A549 (cell line): ENCODE measurements at regions of chr14 and their contacts with region 1.

Region 1: GRCh38 chr14:34714320-34715126 is at the start of gene CFL2:
- DNase-seq: peak; percentile 73 to 88
- ATAC-seq: peak; percentile 97 to 98
- H3K4me3 ChIP-seq: peak within 1 kb of the TSS; percentile 74
- H3K27ac ChIP-seq: peak within 1 kb of the TSS; percentile 83 to 99
- H3K4me1 ChIP-seq: peaks cover 52% of the 10 kb centered on the region
- CTCF ChIP-seq: no peak
- EP300 ChIP-seq: no peak
- POLR2A ChIP-seq: peak; percentile 66
- RAD21 ChIP-seq: no peak; a peak in 1 of 5 replicates
- polyA plus RNA-seq, gene CFL2: 144 and 167 TPM in 2 replicates

Region 2: GRCh38 chr14:34668111-34668510 is 46.4 kb before region 1 on chr14:
- CTCF ChIA-PET with region 1: interaction called, 13 read pairs
- POLR2A ChIA-PET with region 1: interaction called, 3 read pairs
- DNase-seq: no peak
- ATAC-seq: no peak
- H3K4me3 ChIP-seq: no peak overlapping the region
- H3K27ac ChIP-seq: peak overlapping the region in 1 of 2 experiments; percentile 17; a peak in 3 of 6 replicates
- H3K4me1 ChIP-seq: peaks cover 16% of the 10 kb centered on the region
- CTCF ChIP-seq: no peak
- EP300 ChIP-seq: no peak
- POLR2A ChIP-seq: no peak
- RAD21 ChIP-seq: no peak

Region 3: DNA sequence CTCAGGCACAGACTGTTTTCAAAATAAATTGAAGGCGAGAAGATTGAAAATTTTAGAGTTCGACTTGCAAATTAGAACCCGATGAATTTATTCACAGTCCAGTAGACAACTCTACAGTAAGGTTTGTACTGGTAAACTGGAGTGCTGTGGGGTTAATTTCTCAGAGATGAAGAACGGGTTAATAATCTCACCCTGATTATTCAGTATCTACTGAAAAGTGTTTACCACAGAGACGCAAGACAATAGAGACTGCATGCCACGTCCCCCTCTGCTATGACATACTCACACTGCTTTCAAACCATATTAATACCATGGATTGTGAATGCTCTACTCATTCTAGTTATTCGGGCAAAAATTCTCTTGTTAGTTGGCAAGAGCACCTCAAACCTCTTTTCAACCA is 36.2 kb before region 1 on chr14:
- CTCF ChIA-PET with region 1: interaction called, 13 read pairs
- POLR2A ChIA-PET with region 1: interaction called, 3 read pairs
- DNase-seq: no peak
- ATAC-seq: peak in 1 of 2 experiments; percentile 44; a peak in 4 of 6 replicates
- H3K4me3 ChIP-seq: no peak overlapping the region
- H3K27ac ChIP-seq: peak overlapping the region; percentile 15 to 63; a peak in 5 of 6 replicates
- H3K4me1 ChIP-seq: peaks cover 24% of the 10 kb centered on the region
- CTCF ChIP-seq: no peak
- EP300 ChIP-seq: no peak
- POLR2A ChIP-seq: no peak
- RAD21 ChIP-seq: no peak

Region 4: GRCh38 chr14:34693228-34693939 is 21.1 kb before region 1 on chr14:
- CTCF ChIA-PET with region 1: interaction called, 3 read pairs
- POLR2A ChIA-PET with region 1: interaction called, 12 read pairs
- DNase-seq: peak; percentile 68 to 83
- ATAC-seq: peak; percentile 97 to 98
- H3K4me3 ChIP-seq: peak overlapping the region; percentile 53
- H3K27ac ChIP-seq: peak overlapping the region; percentile 82 to 88
- H3K4me1 ChIP-seq: peaks cover 11% of the 10 kb centered on the region; the same call in 2 of the 3 replicates
- CTCF ChIP-seq: no peak
- EP300 ChIP-seq: no peak
- POLR2A ChIP-seq: peak; percentile 87
- RAD21 ChIP-seq: no peak

Region 5: DNA sequence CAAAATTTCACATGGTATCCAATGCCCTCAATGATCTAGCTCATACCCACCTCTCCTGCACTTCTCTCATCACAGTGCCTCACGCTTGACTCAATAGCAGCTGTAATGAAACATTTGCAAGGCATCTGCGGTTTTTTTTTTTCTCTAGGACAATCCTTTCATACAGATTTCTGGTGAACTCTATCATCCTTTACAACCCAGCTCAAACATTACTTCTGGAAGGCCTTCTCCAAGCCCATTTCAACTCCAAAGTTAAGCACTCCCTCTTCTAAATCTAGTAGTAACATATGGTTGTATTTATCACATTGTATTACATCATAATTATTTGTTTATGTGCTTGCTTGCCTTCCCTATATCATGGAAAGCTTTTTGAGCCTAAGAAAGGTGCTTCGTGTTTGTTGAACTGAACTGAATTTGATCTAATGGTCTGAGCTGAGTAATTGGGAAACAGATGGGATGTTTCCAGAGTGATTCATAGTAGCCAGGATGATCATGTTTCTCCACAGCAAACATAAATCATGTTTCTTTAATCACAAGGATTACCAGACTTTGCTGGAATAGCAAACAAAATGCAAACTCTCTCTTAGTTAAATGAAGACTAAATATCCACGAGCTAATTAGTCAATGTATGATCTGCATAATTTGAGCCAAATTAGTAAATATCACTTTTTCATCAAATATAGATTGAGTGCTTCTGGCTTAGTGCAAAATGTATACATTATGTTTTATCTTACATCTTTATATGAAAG is 14.5 kb before region 1 on chr14:
- CTCF ChIA-PET with region 1: interaction called, 8 read pairs
- POLR2A ChIA-PET with region 1: interaction called, 29 read pairs
- DNase-seq: peak; percentile 65 to 90
- ATAC-seq: peak; percentile 93 to 97
- H3K4me3 ChIP-seq: peak overlapping the region; percentile 9; the same call in 1 of the 3 replicates
- H3K27ac ChIP-seq: peak overlapping the region; percentile 77 to 86
- H3K4me1 ChIP-seq: peaks cover 39% of the 10 kb centered on the region
- CTCF ChIP-seq: no peak
- EP300 ChIP-seq: peak in 1 of 2 experiments; percentile 76; a peak in 3 of 5 replicates
- POLR2A ChIP-seq: no peak
- RAD21 ChIP-seq: peak; percentile 5 to 26; a peak in 2 of 5 replicates